Stomach (tissue), 19 donors: ENCODE measurements at regions of chr19 and their contacts with region 1.

Region 1: GRCh38 chr19:39671738-39672363 is 16.1 kb downstream of the LGALS16 start:
- DNase-seq: peak; percentile 29 to 72
- H3K4me3 ChIP-seq: no peak overlapping the region
- H3K27ac ChIP-seq: no peak overlapping the region
- H3K4me1 ChIP-seq: no peaks in the 10 kb centered on the region
- H3K27me3 ChIP-seq: peaks cover 0 to 15% (median 0%) of the 10 kb centered on the region in 3 donors
- CTCF ChIP-seq: peak in 5 of 7 experiments; percentile 11 to 54 (median 25)
- EP300 ChIP-seq: no peak
- POLR2A ChIP-seq: no peak

Region 2: GRCh38 chr19:39557441-39558151 is 114.3 kb before region 1 on chr19:
- intact Hi-C with region 1: loop called (anchors 5 kb)
- DNase-seq: peak in 1 of 2 donors; percentile 32
- H3K4me3 ChIP-seq: no peak overlapping the region
- H3K27ac ChIP-seq: peak overlapping the region in 1 of 5 donors; percentile 58
- H3K4me1 ChIP-seq: peaks cover 0 to 11% (median 5%) of the 10 kb centered on the region in 4 donors
- H3K27me3 ChIP-seq: peaks cover 0 to 8% (median 0%) of the 10 kb centered on the region in 3 donors
- CTCF ChIP-seq: no peak
- EP300 ChIP-seq: no peak
- POLR2A ChIP-seq: no peak

Region 3: GRCh38 chr19:39951686-39952085 is 279.8 kb after region 1 on chr19:
- intact Hi-C with region 1: no loop called
- DNase-seq: peak in 1 of 2 donors; percentile 22
- H3K4me3 ChIP-seq: no peak overlapping the region
- H3K27ac ChIP-seq: no peak overlapping the region
- H3K4me1 ChIP-seq: peaks cover 4 to 20% (median 8%) of the 10 kb centered on the region in 4 donors
- H3K27me3 ChIP-seq: peaks cover 0 to 37% (median 0%) of the 10 kb centered on the region in 3 donors
- CTCF ChIP-seq: no peak
- EP300 ChIP-seq: no peak
- POLR2A ChIP-seq: no peak